CD4-positive, alpha-beta T cell (primary cell): ENCODE measurements at regions of chr22 and their contacts with region 1.

Region 1: GRCh38 chr22:24845041-24845898 is 39.3 kb downstream of the SGSM1 start:
- DNase-seq: peak in 3 of 14 experiments; percentile 17 to 38 (median 35)
- ATAC-seq: no peak
- H3K4me3 ChIP-seq: no peak overlapping the region
- H3K4me3 Mint-ChIP-seq: no peak overlapping the region
- H3K27ac ChIP-seq: no peak overlapping the region
- H3K27ac Mint-ChIP-seq: no peak overlapping the region
- H3K4me1 ChIP-seq: peaks cover 11% of the 10 kb centered on the region
- H3K4me1 Mint-ChIP-seq: no peaks in the 10 kb centered on the region
- H3K27me3 ChIP-seq: no peaks in the 10 kb centered on the region
- H3K27me3 Mint-ChIP-seq: no peaks in the 10 kb centered on the region
- CTCF ChIP-seq: no peak

Region 2: DNA sequence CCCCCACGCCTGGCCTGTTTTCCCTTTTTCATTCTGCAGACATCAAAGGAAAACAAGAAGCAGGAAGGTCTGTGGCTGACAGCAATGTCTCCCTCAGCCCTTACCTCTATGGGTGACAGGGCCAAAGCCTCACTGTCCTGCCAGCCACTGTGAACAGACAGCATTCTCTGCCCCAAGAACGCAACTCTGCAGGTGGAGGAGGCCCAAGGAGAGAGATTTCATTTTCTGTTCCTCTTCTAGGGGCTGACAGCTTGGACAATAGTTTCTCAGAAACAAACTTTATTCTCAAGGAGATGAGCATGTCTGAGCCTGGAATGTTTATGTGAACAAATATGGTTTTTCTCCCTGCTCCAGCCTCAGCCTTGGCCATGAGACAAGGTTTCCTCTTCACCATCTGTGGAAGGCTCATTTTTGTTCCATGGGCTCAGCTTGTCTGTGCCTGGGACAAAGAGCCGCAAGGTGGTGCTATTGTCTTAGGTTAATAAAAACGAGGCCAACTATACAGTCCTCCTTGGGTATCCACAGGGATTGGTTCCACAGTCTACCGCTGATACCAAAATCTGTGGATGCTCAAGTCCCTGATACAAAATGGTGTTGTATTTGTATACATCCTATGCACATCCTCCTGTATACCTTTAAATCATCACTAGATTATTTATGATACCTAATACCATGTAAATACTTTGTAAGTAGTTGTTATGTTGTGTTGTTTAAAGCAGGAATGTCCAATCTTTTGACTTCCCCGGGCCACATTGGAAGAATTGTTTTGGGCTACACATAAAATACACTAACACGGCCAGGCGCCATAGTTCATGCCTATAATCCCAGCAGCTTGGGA is 76.5 kb before region 1 on chr22:
- CTCF ChIA-PET with region 1: interaction called, 14 read pairs
- POLR2A ChIA-PET with region 1: no interaction called
- intact Hi-C with region 1: loop called in 1 of 2 experiments (anchors 1 kb)
- DNase-seq: peak in 13 of 14 experiments; percentile 1 to 62 (median 28)
- ATAC-seq: peak; percentile 48
- H3K4me3 ChIP-seq: no peak overlapping the region
- H3K4me3 Mint-ChIP-seq: no peak overlapping the region
- H3K27ac ChIP-seq: no peak overlapping the region
- H3K27ac Mint-ChIP-seq: no peak overlapping the region
- H3K4me1 ChIP-seq: no peaks in the 10 kb centered on the region
- H3K4me1 Mint-ChIP-seq: no peaks in the 10 kb centered on the region
- H3K27me3 ChIP-seq: peaks cover 0 to 4% of the 10 kb centered on the region in 2 experiments
- H3K27me3 Mint-ChIP-seq: peaks cover 12% of the 10 kb centered on the region
- CTCF ChIP-seq: peak; percentile 46

Region 3: DNA sequence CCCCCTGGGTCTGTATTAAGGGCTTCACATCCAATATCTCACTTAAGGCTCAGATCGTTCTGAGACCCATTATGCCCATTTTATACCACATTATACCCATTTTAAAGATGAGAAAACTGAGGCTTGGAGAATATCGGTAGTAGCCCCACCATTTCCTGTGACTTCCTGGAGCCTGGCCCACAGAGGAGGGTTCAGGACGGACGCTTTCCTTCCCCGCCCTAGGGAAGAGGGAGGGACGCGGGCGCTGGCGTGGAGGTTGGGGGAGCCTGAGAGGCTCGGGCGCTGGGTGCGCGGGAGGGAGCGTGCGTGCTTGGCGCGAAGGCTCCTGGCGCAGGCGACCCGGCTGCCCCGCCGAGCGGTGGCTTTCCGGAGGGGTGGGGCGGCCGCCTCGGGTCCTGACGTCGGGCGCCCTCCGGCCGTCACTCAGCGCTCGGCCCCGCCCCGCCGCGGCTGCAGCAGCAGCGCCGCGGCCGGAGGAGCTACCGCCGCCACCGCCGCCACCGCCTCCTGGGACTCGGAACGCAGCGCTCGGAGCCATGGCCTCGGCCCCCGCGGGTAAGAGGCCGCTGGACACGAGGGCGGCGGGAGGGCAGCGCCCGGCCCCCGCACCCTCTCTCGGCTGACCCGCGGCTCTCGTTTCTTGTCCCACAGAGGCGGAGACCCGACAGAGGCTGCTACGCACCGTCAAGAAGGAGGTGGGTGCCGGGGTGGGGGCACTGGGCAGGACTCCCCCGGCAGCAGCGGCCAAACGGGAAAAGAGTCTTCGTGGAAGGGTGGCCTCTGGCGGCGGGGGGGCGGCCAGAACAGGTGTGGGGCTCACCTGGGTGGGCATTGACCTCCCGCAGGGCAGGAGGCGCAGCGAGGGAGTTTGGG is 39.2 kb before region 1 on chr22 and contains the start of gene SGSM1:
- CTCF ChIA-PET with region 1: interaction called, 14 read pairs
- POLR2A ChIA-PET with region 1: no interaction called
- intact Hi-C with region 1: no loop called
- DNase-seq: peak; percentile 53 to 90 (median 72)
- ATAC-seq: peak; percentile 86
- H3K4me3 ChIP-seq: peak within 1 kb of the TSS; percentile 72
- H3K4me3 Mint-ChIP-seq: peak within 1 kb of the TSS; percentile 76
- H3K27ac ChIP-seq: no peak within 1 kb of the TSS
- H3K27ac Mint-ChIP-seq: peak within 1 kb of the TSS; percentile 37
- H3K4me1 ChIP-seq: peaks cover 34% of the 10 kb centered on the region
- H3K4me1 Mint-ChIP-seq: peaks cover 30% of the 10 kb centered on the region
- H3K27me3 ChIP-seq: no peaks in the 10 kb centered on the region
- H3K27me3 Mint-ChIP-seq: no peaks in the 10 kb centered on the region
- CTCF ChIP-seq: no peak
- total RNA-seq, gene SGSM1: 1.3 to 1.9 TPM

Region 4: GRCh38 chr22:24867323-24868022 is 22.2 kb after region 1 on chr22:
- CTCF ChIA-PET with region 1: no interaction called
- POLR2A ChIA-PET with region 1: no interaction called
- intact Hi-C with region 1: no loop called
- DNase-seq: no peak
- ATAC-seq: no peak
- H3K4me3 ChIP-seq: no peak overlapping the region
- H3K4me3 Mint-ChIP-seq: no peak overlapping the region
- H3K27ac ChIP-seq: no peak overlapping the region
- H3K27ac Mint-ChIP-seq: no peak overlapping the region
- H3K4me1 ChIP-seq: no peaks in the 10 kb centered on the region
- H3K4me1 Mint-ChIP-seq: no peaks in the 10 kb centered on the region
- H3K27me3 ChIP-seq: no peaks in the 10 kb centered on the region
- H3K27me3 Mint-ChIP-seq: no peaks in the 10 kb centered on the region
- CTCF ChIP-seq: no peak

Region 5: DNA sequence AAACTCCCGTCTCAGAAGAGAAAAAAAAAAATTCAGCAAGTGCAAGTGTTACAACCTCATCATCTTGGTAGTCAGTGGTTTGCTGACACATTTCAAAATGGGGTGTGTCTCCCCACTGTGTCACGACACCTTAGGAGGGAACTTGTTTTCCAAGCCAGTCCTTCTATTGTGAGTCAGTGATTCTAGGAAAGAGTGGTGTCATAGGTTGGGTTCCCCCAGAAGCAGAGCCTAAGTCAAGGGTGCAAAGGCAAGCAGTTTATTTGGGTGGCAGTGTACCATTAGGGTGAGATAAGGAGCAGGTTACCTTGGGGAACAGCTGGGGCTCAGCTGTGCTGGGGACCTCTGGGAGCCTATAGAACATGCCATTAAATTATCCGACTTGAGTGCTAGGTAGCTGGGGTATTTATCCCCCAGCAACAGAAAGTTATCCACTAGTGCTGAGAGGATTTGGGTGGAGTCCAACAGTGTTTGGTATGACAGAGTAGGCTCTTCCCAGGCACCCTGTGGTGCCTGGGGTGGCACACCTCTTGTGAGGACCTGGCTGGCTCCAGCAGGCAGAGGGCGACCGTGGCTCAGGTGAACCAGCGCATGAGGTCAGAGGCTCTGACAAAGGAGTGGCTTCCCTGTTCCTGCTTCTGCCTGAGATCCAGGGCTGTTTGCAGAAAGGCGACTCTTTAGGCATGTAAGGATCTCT is 148.9 kb after region 1 on chr22:
- CTCF ChIA-PET with region 1: no interaction called
- POLR2A ChIA-PET with region 1: no interaction called
- intact Hi-C with region 1: no loop called
- DNase-seq: peak in 1 of 14 experiments; percentile 10
- ATAC-seq: no peak
- H3K4me3 ChIP-seq: no peak overlapping the region
- H3K4me3 Mint-ChIP-seq: no peak overlapping the region
- H3K27ac ChIP-seq: no peak overlapping the region
- H3K27ac Mint-ChIP-seq: no peak overlapping the region
- H3K4me1 ChIP-seq: no peaks in the 10 kb centered on the region
- H3K4me1 Mint-ChIP-seq: peaks cover under 1% of the 10 kb centered on the region
- H3K27me3 ChIP-seq: peaks cover 0 to 5% of the 10 kb centered on the region in 2 experiments
- H3K27me3 Mint-ChIP-seq: peaks cover 26% of the 10 kb centered on the region
- CTCF ChIP-seq: no peak